Panc1 (cell line): ENCODE measurements at regions of chr18 and their contacts with region 1.

Region 1: GRCh38 chr18:58529714-58530354 is 99.1 kb downstream of the ALPK2 start:
- DNase-seq: peak; percentile 32
- ATAC-seq: peak; percentile 70; the same call in 1 of the 2 replicates
- H3K4me3 ChIP-seq: no peak overlapping the region
- H3K27ac ChIP-seq: no peak overlapping the region
- H3K4me1 ChIP-seq: no peaks in the 10 kb centered on the region
- H3K27me3 ChIP-seq: no peaks in the 10 kb centered on the region
- CTCF ChIP-seq: peak; percentile 76

Region 2: DNA sequence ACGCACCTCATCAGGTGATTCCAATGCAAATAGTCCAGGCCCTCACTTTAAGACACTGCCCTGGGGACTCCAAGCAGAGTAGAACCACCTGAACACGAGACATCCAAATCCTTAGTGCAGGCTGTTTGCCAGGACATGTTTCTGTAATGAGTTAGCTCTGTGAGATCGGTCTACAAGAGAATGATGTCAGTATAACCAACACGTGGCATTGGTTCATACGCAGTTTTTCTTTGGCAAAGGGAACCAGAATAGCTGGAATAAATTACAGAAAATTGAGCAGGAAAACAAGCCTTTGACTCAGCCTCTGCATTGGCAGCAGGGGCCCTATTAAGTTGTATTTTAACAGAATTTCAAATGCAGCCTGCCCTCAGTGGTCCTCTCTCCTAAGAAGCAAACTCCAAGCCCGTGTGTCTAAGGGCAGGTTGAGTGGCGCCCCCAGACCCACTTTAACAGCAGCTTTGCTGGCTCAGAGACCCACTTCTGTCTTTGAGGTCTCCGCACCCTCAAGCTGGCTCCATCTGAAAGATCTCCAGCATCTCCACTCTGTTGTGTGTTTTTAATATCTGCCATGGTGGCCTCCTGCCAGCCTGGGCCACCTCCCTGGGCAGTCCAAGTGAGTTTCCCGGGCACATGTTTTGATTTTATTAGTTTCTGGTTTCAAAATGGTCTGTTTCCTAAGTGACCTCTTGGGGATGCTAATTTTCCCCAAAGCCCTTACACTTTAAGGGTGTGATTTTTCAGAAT is 37.8 kb after region 1 on chr18:
- CTCF ChIA-PET with region 1: no interaction called
- POLR2A ChIA-PET with region 1: no interaction called
- in situ Hi-C with region 1: no loop called
- intact Hi-C with region 1: no loop called
- DNase-seq: peak; percentile 28
- ATAC-seq: no peak
- H3K4me3 ChIP-seq: no peak overlapping the region
- H3K27ac ChIP-seq: no peak overlapping the region
- H3K4me1 ChIP-seq: no peaks in the 10 kb centered on the region
- H3K27me3 ChIP-seq: no peaks in the 10 kb centered on the region
- CTCF ChIP-seq: no peak

Region 3: DNA sequence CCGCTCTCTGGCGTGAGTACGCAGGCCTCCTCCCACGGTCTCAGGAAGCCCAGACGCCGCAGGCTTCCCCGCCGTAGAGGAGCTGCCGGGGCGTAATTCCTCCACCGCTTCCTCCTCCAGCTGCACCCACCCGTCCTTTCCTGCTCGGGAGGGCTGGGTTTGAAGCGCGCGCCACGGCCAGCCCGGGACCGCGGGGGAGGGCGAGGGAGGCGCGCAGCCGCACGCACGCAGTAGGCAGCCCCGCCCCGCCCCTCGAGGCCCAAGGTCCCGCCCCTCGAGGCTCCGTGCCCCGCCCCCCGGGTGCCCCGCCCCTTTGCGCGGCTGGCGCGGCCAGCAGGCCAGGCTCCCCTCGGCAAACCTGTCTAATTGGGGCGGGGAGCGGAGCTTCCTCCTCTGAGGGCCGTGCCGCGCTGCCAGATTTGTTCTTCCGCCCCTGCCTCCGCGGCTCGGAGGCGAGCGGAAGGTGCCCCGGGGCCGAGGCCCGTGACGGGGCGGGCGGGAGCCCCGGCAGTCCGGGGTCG is 141.3 kb after region 1 on chr18 and contains the start of gene MALT1:
- CTCF ChIA-PET with region 1: interaction called, 3 read pairs
- POLR2A ChIA-PET with region 1: no interaction called
- in situ Hi-C with region 1: no loop called
- intact Hi-C with region 1: loop called (anchors 5 kb)
- DNase-seq: no peak
- ATAC-seq: peak; percentile 91
- H3K4me3 ChIP-seq: peak within 1 kb of the TSS; percentile 59 to 80
- H3K27ac ChIP-seq: peak within 1 kb of the TSS; percentile 85
- H3K4me1 ChIP-seq: peaks cover 27% of the 10 kb centered on the region
- H3K27me3 ChIP-seq: no peaks in the 10 kb centered on the region
- CTCF ChIP-seq: no peak
- total RNA-seq, gene MALT1: 34.0 TPM

Region 4: GRCh38 chr18:58723810-58724595 is 194.2 kb after region 1 on chr18:
- CTCF ChIA-PET with region 1: interaction called, 12 read pairs
- POLR2A ChIA-PET with region 1: no interaction called
- in situ Hi-C with region 1: no loop called
- intact Hi-C with region 1: no loop called
- DNase-seq: no peak
- ATAC-seq: no peak
- H3K4me3 ChIP-seq: no peak overlapping the region
- H3K27ac ChIP-seq: no peak overlapping the region
- H3K4me1 ChIP-seq: no peaks in the 10 kb centered on the region
- H3K27me3 ChIP-seq: no peaks in the 10 kb centered on the region
- CTCF ChIP-seq: no peak

Region 5: GRCh38 chr18:58761241-58761969 is 231.6 kb after region 1 on chr18:
- CTCF ChIA-PET with region 1: interaction called, 6 read pairs
- POLR2A ChIA-PET with region 1: no interaction called
- in situ Hi-C with region 1: no loop called
- intact Hi-C with region 1: loop called (anchors 5 kb)
- DNase-seq: no peak
- ATAC-seq: no peak
- H3K4me3 ChIP-seq: no peak overlapping the region
- H3K27ac ChIP-seq: no peak overlapping the region
- H3K4me1 ChIP-seq: no peaks in the 10 kb centered on the region
- H3K27me3 ChIP-seq: no peaks in the 10 kb centered on the region
- CTCF ChIP-seq: no peak